ENCODE measurements at regions of chr1 and their contacts with region 1.

Region 1: DNA sequence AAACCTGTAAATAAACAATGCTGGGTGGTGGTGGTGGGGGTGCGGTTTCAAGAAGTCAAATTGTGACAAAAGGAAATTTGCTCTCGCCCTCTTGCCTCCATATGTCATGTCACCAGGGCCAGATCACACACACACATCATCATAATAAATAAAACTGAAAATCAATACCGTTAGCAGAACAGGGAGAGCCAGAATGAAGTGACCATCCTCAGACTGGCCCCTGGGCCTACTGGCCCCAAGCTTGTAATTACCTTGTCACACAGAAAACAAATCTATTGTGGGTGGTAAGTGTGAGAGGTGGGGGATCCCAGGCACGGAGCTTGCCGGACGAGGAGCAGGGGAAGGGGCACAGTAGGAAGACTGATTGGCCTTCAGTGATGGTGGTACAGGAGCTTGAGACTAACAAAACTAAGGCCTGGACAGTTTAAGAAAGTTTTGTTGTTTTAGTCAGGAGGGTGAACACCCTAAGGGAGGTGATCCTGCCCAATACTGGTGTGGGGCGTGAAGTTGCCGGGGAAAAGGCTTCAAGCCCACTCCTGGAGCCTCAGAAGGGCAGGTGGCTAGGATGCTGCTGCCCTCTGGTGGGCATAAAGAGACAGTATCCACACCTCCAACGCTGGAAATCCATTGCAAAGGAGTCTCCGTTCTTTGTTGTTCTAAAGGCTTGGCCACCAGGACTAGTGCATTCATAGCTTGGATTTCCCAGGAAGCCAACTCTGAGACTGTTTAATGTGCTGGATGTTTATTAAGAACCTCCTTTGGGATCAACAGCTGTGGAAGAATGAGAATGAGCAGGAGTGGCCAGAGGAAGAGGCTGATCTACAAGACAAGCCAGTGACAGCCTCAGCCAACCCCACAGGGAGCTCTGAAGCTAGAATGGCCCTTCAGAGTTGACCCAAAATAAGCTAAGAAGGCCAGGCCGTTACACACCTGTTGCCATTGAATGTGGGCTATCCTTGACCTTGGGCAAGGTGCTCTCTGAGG is 8.1 kb upstream of the C1orf216 start:
- DNase-seq: peak; percentile 55
- H3K4me3 Mint-ChIP-seq: no peak overlapping the region
- H3K27ac Mint-ChIP-seq: no peak overlapping the region
- H3K4me1 Mint-ChIP-seq: no peaks in the 10 kb centered on the region
- H3K27me3 Mint-ChIP-seq: no peaks in the 10 kb centered on the region

Region 2: DNA sequence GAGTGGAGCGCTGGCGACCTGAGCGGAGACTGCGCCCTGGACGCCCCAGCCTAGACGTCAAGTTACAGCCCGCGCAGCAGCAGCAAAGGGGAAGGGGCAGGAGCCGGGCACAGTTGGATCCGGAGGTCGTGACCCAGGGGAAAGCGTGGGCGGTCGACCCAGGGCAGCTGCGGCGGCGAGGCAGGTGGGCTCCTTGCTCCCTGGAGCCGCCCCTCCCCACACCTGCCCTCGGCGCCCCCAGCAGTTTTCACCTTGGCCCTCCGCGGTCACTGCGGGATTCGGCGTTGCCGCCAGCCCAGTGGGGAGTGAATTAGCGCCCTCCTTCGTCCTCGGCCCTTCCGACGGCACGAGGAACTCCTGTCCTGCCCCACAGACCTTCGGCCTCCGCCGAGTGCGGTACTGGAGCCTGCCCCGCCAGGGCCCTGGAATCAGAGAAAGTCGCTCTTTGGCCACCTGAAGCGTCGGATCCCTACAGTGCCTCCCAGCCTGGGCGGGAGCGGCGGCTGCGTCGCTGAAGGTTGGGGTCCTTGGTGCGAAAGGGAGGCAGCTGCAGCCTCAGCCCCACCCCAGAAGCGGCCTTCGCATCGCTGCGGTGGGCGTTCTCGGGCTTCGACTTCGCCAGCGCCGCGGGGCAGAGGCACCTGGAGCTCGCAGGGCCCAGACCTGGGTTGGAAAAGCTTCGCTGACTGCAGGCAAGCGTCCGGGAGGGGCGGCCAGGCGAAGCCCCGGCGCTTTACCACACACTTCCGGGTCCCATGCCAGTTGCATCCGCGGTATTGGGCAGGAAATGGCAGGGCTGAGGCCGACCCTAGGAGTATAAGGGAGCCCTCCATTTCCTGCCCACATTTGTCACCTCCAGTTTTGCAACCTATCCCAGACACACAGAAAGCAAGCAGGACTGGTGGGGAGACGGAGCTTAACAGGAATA is 149.4 kb before region 1 on chr1:
- CTCF ChIA-PET with region 1: interaction called, 24 read pairs
- DNase-seq: peak; percentile 84
- H3K4me3 Mint-ChIP-seq: peak overlapping the region; percentile 68
- H3K27ac Mint-ChIP-seq: peak overlapping the region; percentile 62
- H3K4me1 Mint-ChIP-seq: peaks cover 28% of the 10 kb centered on the region
- H3K27me3 Mint-ChIP-seq: peaks cover 63% of the 10 kb centered on the region

Region 3: GRCh38 chr1:35737120-35737519 is 10.4 kb after region 1 on chr1:
- CTCF ChIA-PET with region 1: interaction called, 17 read pairs
- DNase-seq: no peak
- H3K4me3 Mint-ChIP-seq: no peak overlapping the region
- H3K27ac Mint-ChIP-seq: no peak overlapping the region
- H3K4me1 Mint-ChIP-seq: no peaks in the 10 kb centered on the region
- H3K27me3 Mint-ChIP-seq: no peaks in the 10 kb centered on the region

Region 4: GRCh38 chr1:35753626-35754260 is 27.0 kb after region 1 on chr1:
- CTCF ChIA-PET with region 1: interaction called, 22 read pairs
- DNase-seq: no peak
- H3K4me3 Mint-ChIP-seq: no peak overlapping the region
- H3K27ac Mint-ChIP-seq: no peak overlapping the region
- H3K4me1 Mint-ChIP-seq: no peaks in the 10 kb centered on the region
- H3K27me3 Mint-ChIP-seq: no peaks in the 10 kb centered on the region

Measured in activated naive CD4-positive, alpha-beta T cell treated with anti-CD3 and anti-CD28 coated beads, Interleukin-2, amount 10 ng/mL, durations not matched to agents 7 days and 5 days (primary cell).